ENCODE measurements at regions of chr11 and their contacts with region 1.

Region 1: GRCh38 chr11:61947486-61948210 is 2.5 kb upstream of the BEST1 start:
- DNase-seq: peak; percentile 44 to 71 (median 46)
- H3K4me3 ChIP-seq: no peak overlapping the region
- H3K4me3 Mint-ChIP-seq: no peak overlapping the region
- H3K27ac ChIP-seq: no peak overlapping the region
- H3K27ac Mint-ChIP-seq: peak overlapping the region in 1 of 8 donors; percentile 38
- H3K4me1 ChIP-seq: no peaks in the 10 kb centered on the region
- H3K4me1 Mint-ChIP-seq: no peaks in the 10 kb centered on the region
- H3K27me3 ChIP-seq: no peaks in the 10 kb centered on the region
- H3K27me3 Mint-ChIP-seq: peaks cover 4 to 14% of the 10 kb centered on the region in 2 donors

Region 2: GRCh38 chr11:61769169-61769920 is 178.3 kb before region 1 on chr11:
- CTCF ChIA-PET with region 1: no interaction called
- POLR2A ChIA-PET with region 1: no interaction called
- DNase-seq: no peak
- H3K4me3 ChIP-seq: no peak overlapping the region
- H3K4me3 Mint-ChIP-seq: no peak overlapping the region
- H3K27ac ChIP-seq: no peak overlapping the region
- H3K27ac Mint-ChIP-seq: no peak overlapping the region
- H3K4me1 ChIP-seq: peaks cover 5% of the 10 kb centered on the region
- H3K4me1 Mint-ChIP-seq: peaks cover 0 to 1% (median 0%) of the 10 kb centered on the region in 3 donors
- H3K27me3 ChIP-seq: no peaks in the 10 kb centered on the region
- H3K27me3 Mint-ChIP-seq: no peaks in the 10 kb centered on the region

Region 3: DNA sequence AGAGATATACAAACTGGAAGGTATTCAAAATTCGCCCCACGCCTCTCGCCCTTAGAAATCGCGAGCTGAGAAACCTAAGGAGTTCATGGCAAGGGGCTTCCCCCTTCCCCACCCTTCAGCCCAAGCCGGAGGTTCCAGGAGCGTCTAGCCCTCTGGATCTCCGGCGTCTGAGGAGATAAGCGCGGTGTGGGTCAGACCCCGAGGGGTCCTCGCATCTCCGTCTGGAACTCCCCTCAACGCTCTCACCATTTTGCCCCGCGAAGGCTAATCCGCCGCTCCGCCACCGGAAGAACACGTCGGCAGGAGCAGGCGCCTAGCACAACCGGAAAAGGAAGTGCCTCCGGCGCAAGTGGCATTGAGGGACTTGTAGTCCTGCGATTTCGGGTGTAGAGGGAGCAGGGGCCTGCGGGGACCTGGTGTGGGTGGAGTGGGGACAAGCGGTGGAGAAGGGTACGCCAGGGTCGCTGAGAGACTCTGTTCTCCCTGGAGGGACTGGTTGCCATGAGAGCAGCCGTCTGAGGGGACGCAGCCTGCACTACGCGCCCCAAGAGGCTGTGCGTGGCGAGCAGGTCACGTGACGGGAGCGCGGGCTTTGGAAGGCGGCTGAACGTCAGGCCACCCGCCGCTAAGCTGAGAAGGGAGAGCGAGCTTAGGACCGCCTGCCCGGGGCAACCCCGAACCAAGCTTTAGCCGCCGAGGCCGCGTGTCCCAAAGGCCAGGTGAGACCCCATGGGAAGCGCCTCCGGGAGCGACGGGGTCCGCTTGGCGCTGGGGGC is 155.2 kb before region 1 on chr11 and contains the starts of genes FEN1 and TMEM258:
- CTCF ChIA-PET with region 1: interaction called, 42 read pairs
- POLR2A ChIA-PET with region 1: interaction called, 3 read pairs
- DNase-seq: peak; percentile 80 to 91 (median 85)
- H3K4me3 ChIP-seq: peak within 1 kb of the TSS; percentile 92
- H3K4me3 Mint-ChIP-seq: peak within 1 kb of the TSS; percentile 91 to 100 (median 92)
- H3K27ac ChIP-seq: peak within 1 kb of the TSS; percentile 94
- H3K27ac Mint-ChIP-seq: peak within 1 kb of the TSS; percentile 96 to 100 (median 99)
- H3K4me1 ChIP-seq: peaks cover 17% of the 10 kb centered on the region
- H3K4me1 Mint-ChIP-seq: peaks cover 24 to 49% (median 36%) of the 10 kb centered on the region in 3 donors
- H3K27me3 ChIP-seq: no peaks in the 10 kb centered on the region
- H3K27me3 Mint-ChIP-seq: no peaks in the 10 kb centered on the region
- total RNA-seq, gene FEN1: 112 to 121 TPM
- total RNA-seq, gene TMEM258: 148 to 152 TPM

Region 4: DNA sequence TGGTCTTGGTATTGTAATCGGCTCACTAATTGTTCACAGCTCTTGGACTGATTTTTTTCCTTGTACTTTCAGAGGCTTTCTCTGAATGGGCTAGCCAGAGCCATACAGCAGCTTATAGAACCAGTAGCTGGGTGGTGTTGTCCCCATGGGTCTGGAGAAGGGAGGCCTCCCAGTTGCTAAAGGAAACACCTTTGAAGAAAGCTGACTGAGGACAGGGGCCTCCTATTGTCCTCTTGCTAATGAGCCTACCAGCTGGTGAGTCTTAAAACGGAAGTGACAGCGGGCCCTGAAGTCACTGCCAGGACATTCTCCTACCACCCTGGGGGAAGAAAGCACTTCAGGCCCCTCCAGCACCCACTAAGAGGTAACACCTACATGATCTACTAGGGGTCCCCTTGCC is 66.3 kb before region 1 on chr11:
- CTCF ChIA-PET with region 1: no interaction called
- POLR2A ChIA-PET with region 1: no interaction called
- DNase-seq: no peak
- H3K4me3 ChIP-seq: no peak overlapping the region
- H3K4me3 Mint-ChIP-seq: no peak overlapping the region
- H3K27ac ChIP-seq: no peak overlapping the region
- H3K27ac Mint-ChIP-seq: peak overlapping the region in 2 of 8 donors; percentile 7 to 38
- H3K4me1 ChIP-seq: no peaks in the 10 kb centered on the region
- H3K4me1 Mint-ChIP-seq: no peaks in the 10 kb centered on the region
- H3K27me3 ChIP-seq: no peaks in the 10 kb centered on the region
- H3K27me3 Mint-ChIP-seq: no peaks in the 10 kb centered on the region

Region 5: DNA sequence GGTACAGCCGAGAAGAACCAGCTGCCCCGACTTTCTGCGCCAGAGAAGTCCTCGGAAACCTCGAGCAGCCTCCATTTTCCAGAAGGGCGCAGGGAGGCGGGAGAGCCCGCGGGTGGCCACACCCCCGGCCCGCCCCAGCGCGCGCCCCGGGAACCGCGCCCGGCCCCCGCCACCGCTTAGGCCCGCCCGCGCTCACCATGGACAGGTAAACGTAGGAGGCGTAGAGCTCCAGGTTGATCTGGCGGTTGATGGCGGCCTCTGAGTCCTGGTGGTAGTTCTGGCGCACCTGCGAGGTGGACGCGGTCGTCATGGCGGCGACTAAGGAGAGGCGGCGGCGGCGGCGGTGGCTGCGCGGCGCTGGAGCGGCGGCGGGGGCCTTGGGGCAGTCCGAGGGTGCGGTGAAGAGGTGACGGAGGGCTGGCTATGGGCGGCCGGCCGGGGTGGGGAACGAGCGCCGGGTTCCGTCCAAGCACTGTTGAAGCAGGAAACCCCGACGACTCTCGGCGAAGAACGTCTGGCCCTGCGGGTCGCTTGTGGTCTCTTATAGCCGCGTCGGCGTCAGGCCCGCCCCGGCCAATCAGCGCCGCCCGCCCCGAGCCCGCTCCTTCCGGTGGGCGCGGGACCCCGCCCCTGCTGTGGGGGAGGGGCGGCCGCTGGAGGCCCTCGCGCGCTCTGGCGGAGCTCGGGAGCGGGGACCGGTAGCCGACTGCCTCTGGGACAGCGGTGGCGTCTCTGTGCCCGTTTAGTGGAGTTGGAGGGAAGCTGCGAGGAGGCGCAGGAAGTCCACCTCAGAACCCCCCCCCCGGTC is 19.7 kb after region 1 on chr11 and contains the start of gene FTH1:
- CTCF ChIA-PET with region 1: interaction called, 12 read pairs
- POLR2A ChIA-PET with region 1: interaction called, 7 read pairs
- DNase-seq: peak; percentile 83 to 95 (median 90)
- H3K4me3 ChIP-seq: peak within 1 kb of the TSS; percentile 98
- H3K4me3 Mint-ChIP-seq: peak within 1 kb of the TSS; percentile 95 to 100 (median 95)
- H3K27ac ChIP-seq: peak within 1 kb of the TSS; percentile 94
- H3K27ac Mint-ChIP-seq: peak within 1 kb of the TSS; percentile 96 to 100 (median 98)
- H3K4me1 ChIP-seq: peaks cover 42% of the 10 kb centered on the region
- H3K4me1 Mint-ChIP-seq: peaks cover 55 to 72% (median 60%) of the 10 kb centered on the region in 3 donors
- H3K27me3 ChIP-seq: no peaks in the 10 kb centered on the region
- H3K27me3 Mint-ChIP-seq: peaks cover 0 to 9% of the 10 kb centered on the region in 2 donors
- total RNA-seq, gene FTH1: 490 to 506 TPM

Region 6: GRCh38 chr11:62108017-62108750 is 160.5 kb after region 1 on chr11:
- CTCF ChIA-PET with region 1: interaction called, 13 read pairs
- POLR2A ChIA-PET with region 1: no interaction called
- DNase-seq: peak in 3 of 5 donors; percentile 21 to 69 (median 52)
- H3K4me3 ChIP-seq: no peak overlapping the region
- H3K4me3 Mint-ChIP-seq: peak overlapping the region in 1 of 7 donors; percentile 9
- H3K27ac ChIP-seq: no peak overlapping the region
- H3K27ac Mint-ChIP-seq: no peak overlapping the region
- H3K4me1 ChIP-seq: peaks cover 14% of the 10 kb centered on the region
- H3K4me1 Mint-ChIP-seq: peaks cover 12 to 16% (median 16%) of the 10 kb centered on the region in 3 donors
- H3K27me3 ChIP-seq: no peaks in the 10 kb centered on the region
- H3K27me3 Mint-ChIP-seq: peaks cover 2 to 5% of the 10 kb centered on the region in 2 donors

Region 7: GRCh38 chr11:62143727-62144126 is 196.1 kb after region 1 on chr11:
- CTCF ChIA-PET with region 1: no interaction called
- POLR2A ChIA-PET with region 1: no interaction called
- DNase-seq: no peak
- H3K4me3 ChIP-seq: no peak overlapping the region
- H3K4me3 Mint-ChIP-seq: no peak overlapping the region
- H3K27ac ChIP-seq: no peak overlapping the region
- H3K27ac Mint-ChIP-seq: peak overlapping the region in 2 of 8 donors; percentile 17 to 70
- H3K4me1 ChIP-seq: no peaks in the 10 kb centered on the region
- H3K4me1 Mint-ChIP-seq: no peaks in the 10 kb centered on the region
- H3K27me3 ChIP-seq: no peaks in the 10 kb centered on the region
- H3K27me3 Mint-ChIP-seq: no peaks in the 10 kb centered on the region